ENCODE measurements at regions of chr3 and their contacts with region 1.

Region 1: DNA sequence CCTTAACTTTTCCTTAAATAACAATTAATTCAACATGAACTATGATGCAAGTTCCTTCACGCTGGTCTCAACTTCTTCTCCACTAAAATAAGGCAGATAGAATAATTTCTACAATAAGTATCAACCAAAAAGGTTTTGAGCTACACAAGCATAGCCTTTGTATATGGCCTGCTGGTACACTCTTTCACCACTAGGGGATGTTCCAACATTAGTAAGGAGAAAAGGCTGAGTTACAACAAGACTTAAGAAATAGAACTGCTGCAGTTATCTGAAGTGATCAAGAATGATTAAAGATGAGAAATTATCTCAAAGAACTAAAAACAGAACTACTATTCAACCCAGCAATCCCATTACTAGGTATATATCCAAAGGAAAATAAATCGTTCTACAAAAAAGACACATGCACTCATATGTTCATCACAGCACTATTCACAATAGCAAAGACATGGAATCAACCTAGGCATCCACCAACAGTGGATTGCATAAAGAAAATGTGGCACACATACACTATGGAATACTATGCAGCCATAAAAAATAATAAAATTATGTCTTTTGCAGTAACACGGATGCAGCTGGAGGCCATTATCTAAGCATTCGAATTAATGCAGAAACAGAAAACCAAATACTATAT is 14.4 kb downstream of the ATP13A3 start:
- DNase-seq: no peak
- H3K4me3 Mint-ChIP-seq: no peak overlapping the region
- H3K27ac Mint-ChIP-seq: no peak overlapping the region
- H3K4me1 Mint-ChIP-seq: peaks cover 23% of the 10 kb centered on the region
- H3K27me3 Mint-ChIP-seq: no peaks in the 10 kb centered on the region

Region 2: GRCh38 chr3:194306109-194306686 is 166.2 kb before region 1 on chr3:
- CTCF ChIA-PET with region 1: no interaction called
- POLR2A ChIA-PET with region 1: no interaction called
- intact Hi-C with region 1: no loop called
- DNase-seq: peak; percentile 77
- H3K4me3 Mint-ChIP-seq: peak overlapping the region; percentile 30
- H3K27ac Mint-ChIP-seq: peak overlapping the region; percentile 85
- H3K4me1 Mint-ChIP-seq: peaks cover 38% of the 10 kb centered on the region
- H3K27me3 Mint-ChIP-seq: peaks cover 2% of the 10 kb centered on the region

Region 3: DNA sequence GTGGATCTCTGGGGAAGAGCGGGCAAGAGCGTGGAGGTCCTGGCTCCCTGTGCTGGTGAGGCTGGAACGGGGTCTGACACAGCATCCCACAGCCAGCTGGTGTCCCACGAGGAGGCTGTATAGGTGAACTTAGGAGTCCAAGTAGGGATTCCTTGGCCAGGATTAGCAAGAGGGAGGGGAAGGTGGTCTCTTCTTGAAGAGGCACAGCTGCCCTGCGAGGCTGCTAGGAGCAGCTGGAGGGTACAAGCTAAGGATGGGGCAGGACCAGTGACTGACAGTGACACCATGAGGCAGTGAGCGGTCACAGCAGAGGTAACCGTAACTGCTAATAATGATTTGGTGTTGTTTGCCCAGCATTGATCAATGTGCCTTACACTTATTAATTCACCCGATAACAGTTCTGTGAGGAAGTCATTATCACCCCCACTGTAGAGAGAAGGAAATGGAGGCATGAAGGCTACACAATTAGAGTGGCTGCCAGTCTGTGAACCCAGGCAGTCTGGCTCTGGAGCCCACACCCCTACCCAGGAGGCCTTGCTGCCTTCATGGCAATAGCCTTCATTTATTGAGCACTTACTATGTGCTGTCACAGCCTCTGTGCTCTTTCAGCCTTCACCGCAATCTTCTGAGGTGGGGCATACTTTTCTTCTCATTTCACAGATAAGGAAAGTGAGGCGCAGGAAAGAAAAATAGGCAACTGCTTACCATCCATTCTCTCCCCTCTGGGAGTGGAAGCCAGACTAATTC is 101.5 kb after region 1 on chr3:
- CTCF ChIA-PET with region 1: interaction called, 97 read pairs
- POLR2A ChIA-PET with region 1: no interaction called
- intact Hi-C with region 1: loop called (anchors 1 kb)
- DNase-seq: peak; percentile 64
- H3K4me3 Mint-ChIP-seq: no peak overlapping the region
- H3K27ac Mint-ChIP-seq: no peak overlapping the region
- H3K4me1 Mint-ChIP-seq: peaks cover 28% of the 10 kb centered on the region
- H3K27me3 Mint-ChIP-seq: peaks cover 22% of the 10 kb centered on the region

Region 4: DNA sequence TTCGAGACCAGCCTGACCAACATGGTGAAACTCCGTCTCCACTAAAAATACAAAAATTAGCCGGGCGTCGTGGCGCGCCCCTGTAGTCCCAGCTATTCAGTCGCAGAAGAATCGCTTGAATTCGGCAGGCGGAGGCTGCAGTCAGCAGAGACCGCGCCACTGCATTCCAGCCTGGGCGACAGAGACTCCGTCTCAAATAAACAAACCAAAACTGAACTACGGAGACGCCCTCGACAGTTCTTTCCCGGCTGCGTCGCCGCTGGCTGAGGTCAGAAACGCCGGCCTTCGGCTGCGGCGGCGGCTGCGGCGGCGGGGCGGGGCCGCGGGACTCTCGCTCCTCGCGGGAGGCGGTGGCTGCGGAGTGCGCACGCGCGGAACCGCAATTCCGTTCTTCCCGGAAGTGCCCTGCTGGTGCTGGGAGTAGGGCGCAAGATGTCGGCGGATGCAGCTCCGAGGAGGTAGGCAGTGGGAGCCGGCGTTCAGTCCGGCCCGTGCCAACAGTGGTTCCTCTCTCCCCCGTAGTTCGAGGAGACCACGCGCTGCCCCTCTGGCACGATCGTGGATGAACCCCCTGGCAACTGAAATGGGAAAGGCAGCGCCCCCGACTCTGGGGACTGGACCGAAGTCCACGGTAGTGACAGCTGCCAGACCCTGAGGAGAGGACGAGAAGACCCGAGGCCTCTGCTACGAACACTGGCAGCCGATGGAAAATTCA is 111.4 kb after region 1 on chr3:
- CTCF ChIA-PET with region 1: interaction called, 13 read pairs
- POLR2A ChIA-PET with region 1: no interaction called
- intact Hi-C with region 1: loop called (anchors 2 kb)
- DNase-seq: peak; percentile 96
- H3K4me3 Mint-ChIP-seq: peak overlapping the region; percentile 96
- H3K27ac Mint-ChIP-seq: peak overlapping the region; percentile 97
- H3K4me1 Mint-ChIP-seq: peaks cover 27% of the 10 kb centered on the region
- H3K27me3 Mint-ChIP-seq: no peaks in the 10 kb centered on the region

Region 5: GRCh38 chr3:194592798-194593752 is 120.7 kb after region 1 on chr3:
- CTCF ChIA-PET with region 1: interaction called, 113 read pairs
- POLR2A ChIA-PET with region 1: no interaction called
- intact Hi-C with region 1: loop called (anchors 1 kb)
- DNase-seq: no peak
- H3K4me3 Mint-ChIP-seq: no peak overlapping the region
- H3K27ac Mint-ChIP-seq: no peak overlapping the region
- H3K4me1 Mint-ChIP-seq: peaks cover 4% of the 10 kb centered on the region
- H3K27me3 Mint-ChIP-seq: no peaks in the 10 kb centered on the region

Region 6: GRCh38 chr3:194598771-194599557 is 126.6 kb after region 1 on chr3:
- CTCF ChIA-PET with region 1: interaction called, 113 read pairs
- POLR2A ChIA-PET with region 1: no interaction called
- intact Hi-C with region 1: loop called (anchors 1 kb)
- DNase-seq: no peak
- H3K4me3 Mint-ChIP-seq: no peak overlapping the region
- H3K27ac Mint-ChIP-seq: no peak overlapping the region
- H3K4me1 Mint-ChIP-seq: peaks cover 4% of the 10 kb centered on the region
- H3K27me3 Mint-ChIP-seq: no peaks in the 10 kb centered on the region

Region 7: GRCh38 chr3:194814878-194815357 is 342.5 kb after region 1 on chr3:
- CTCF ChIA-PET with region 1: no interaction called
- POLR2A ChIA-PET with region 1: no interaction called
- intact Hi-C with region 1: no loop called
- DNase-seq: no peak
- H3K4me3 Mint-ChIP-seq: no peak overlapping the region
- H3K27ac Mint-ChIP-seq: no peak overlapping the region
- H3K4me1 Mint-ChIP-seq: no peaks in the 10 kb centered on the region
- H3K27me3 Mint-ChIP-seq: peaks cover 3% of the 10 kb centered on the region

Measured in activated CD4-positive, alpha-beta memory T cell treated with anti-CD3 and anti-CD28 coated beads for 36 hours (primary cell).